ENCODE measurements at regions of chr5 and their contacts with region 1.

Region 1: DNA sequence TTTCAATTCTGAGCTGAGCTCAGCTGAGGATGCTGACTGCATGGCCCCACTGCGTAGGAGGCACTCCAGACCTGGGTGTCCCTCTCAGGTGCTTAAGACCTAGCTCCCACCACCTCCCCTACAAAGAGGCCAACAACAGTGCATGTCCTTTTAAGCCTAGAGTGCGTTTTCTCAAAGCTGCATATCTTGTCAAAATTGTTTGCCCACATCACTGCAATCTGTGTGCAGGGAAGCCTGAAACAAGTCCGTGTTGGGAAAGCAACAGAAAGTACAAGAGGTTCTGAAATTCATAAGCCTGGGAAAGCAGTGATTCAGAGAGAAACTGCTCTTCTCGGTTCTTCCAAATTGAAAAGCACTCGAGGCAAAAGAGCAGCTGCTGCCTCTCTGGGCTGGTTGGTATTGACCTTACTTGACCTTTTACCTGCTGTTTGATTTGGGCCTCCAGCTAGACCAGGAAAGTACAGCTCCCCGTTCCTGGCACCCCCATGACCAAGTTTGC is 238.4 kb downstream of the NR2F1-AS1 start:
- DNase-seq: no peak
- ATAC-seq: no peak
- H3K4me3 Mint-ChIP-seq: no peak overlapping the region
- H3K27ac Mint-ChIP-seq: no peak overlapping the region
- H3K4me1 Mint-ChIP-seq: peaks cover 7% of the 10 kb centered on the region
- H3K27me3 Mint-ChIP-seq: no peaks in the 10 kb centered on the region
- CTCF ChIP-seq: no peak

Region 2: GRCh38 chr5:93299681-93300308 is 42.8 kb before region 1 on chr5:
- CTCF ChIA-PET with region 1: no interaction called
- POLR2A ChIA-PET with region 1: interaction called, 11 read pairs
- DNase-seq: peak; percentile 44
- ATAC-seq: peak; percentile 86
- H3K4me3 Mint-ChIP-seq: peak overlapping the region; percentile 56
- H3K27ac Mint-ChIP-seq: peak overlapping the region; percentile 21; the same call in 1 of the 2 replicates
- H3K4me1 Mint-ChIP-seq: peaks cover 42% of the 10 kb centered on the region
- H3K27me3 Mint-ChIP-seq: no peaks in the 10 kb centered on the region; the same call in 1 of the 2 replicates
- CTCF ChIP-seq: no peak

Measured in WTC11 (cell line).